Right lobe of liver (tissue), 6 donors: ENCODE measurements at regions of chr2 and their contacts with region 1.

Region 1: DNA sequence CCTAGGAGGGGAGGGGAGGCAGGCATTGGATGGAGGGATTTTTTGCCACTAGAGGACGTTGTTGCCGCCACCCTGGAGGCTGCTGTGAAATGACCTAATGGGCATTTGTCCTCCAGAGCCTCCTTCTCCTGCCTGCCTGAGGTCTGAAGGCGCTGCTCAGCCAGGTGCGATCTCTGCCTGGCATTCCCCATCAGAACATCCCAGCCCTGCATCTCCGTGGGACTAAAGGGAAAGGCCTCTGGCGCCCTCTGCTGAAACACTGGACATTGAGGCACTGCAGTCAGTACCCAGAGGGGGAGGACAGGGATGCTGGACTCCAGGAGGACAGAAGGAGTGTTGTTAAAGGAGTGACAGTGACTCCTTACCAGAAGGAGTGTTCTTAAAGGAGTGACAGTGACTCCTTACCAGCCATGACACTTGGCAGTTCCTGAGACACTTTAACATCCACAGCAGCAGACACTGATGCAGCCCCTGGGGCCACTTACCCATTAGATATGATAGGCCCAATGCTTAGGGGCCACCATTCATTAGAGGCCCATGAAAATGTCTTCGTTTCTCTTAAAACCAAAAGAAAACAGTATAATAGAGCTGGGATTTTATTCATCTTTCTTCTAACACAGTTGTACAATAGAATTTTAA is 17.0 kb downstream of the THNSL2 start:
- DNase-seq: peak; percentile 79 to 85 (median 82)
- ATAC-seq: peak; percentile 93
- H3K4me3 ChIP-seq: no peak overlapping the region
- H3K27ac ChIP-seq: no peak overlapping the region
- H3K4me1 ChIP-seq: peaks cover 0 to 11% (median 0%) of the 10 kb centered on the region in 4 donors
- H3K27me3 ChIP-seq: no peaks in the 10 kb centered on the region
- CTCF ChIP-seq: peak; percentile 76 to 88 (median 82)
- POLR2A ChIP-seq: no peak

Region 2: DNA sequence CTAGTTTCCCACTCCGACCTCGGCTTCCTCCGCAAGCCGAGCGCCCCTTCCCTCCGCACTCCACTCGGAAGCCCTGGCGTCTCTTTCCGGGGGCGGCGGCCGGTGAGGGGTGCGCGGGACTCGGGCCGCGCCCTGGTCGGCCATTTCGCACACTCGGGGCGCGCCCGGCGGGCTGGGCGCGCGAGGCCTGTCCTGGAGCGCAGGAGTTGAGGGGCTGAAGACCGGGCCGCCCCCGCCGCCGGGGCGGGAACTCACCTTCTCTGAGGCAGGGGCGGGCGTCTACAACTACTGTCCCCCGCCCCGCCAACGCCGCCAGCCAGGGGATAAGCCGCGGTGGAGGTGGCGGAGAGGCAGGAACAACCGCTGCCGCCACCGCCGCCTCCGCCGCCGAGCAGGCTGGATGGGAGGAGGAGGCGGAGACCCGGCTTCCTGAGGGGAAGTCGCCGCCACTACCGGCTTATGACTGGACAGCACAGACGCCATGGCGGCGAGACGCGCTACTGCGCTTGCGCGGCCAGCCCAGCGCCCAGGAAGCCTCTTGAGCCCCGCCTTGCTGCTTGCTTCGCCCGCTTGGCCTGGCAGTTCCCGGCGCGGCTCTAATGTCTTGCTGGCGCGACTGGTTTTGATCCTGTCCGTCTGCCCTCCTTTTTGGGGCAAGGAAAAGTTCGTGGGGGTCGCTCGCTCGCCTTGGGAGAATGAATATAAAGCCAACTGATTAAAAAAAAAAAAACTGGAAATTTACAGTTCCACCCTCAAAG is 131.6 kb before region 1 on chr2 and contains the start of gene KRCC1:
- intact Hi-C with region 1: loop called in 1 of 2 experiments (anchors 10 kb)
- DNase-seq: peak; percentile 96 to 98 (median 98)
- ATAC-seq: peak; percentile 88 to 97 (median 96)
- H3K4me3 ChIP-seq: peak within 1 kb of the TSS; percentile 70 to 87 (median 82)
- H3K27ac ChIP-seq: peak within 1 kb of the TSS; percentile 82 to 99 (median 87)
- H3K4me1 ChIP-seq: peaks cover 0 to 35% (median 11%) of the 10 kb centered on the region in 4 donors
- H3K27me3 ChIP-seq: no peaks in the 10 kb centered on the region
- CTCF ChIP-seq: peak in 3 of 4 donors; percentile 3 to 12 (median 11)
- POLR2A ChIP-seq: peak; percentile 98
- total RNA-seq, gene KRCC1: 9.3 to 17.1 (median 11.5) TPM

Region 3: GRCh38 chr2:88318071-88318955 is 131.2 kb after region 1 on chr2:
- intact Hi-C with region 1: loop called in 1 of 2 experiments (anchors 10 kb)
- DNase-seq: no peak
- ATAC-seq: no peak
- H3K4me3 ChIP-seq: no peak overlapping the region
- H3K27ac ChIP-seq: no peak overlapping the region
- H3K4me1 ChIP-seq: peaks cover 0 to 7% (median 0%) of the 10 kb centered on the region in 4 donors
- H3K27me3 ChIP-seq: no peaks in the 10 kb centered on the region
- CTCF ChIP-seq: no peak
- POLR2A ChIP-seq: no peak